ENCODE measurements at regions of chr14 and their contacts with region 1.

Region 1: DNA sequence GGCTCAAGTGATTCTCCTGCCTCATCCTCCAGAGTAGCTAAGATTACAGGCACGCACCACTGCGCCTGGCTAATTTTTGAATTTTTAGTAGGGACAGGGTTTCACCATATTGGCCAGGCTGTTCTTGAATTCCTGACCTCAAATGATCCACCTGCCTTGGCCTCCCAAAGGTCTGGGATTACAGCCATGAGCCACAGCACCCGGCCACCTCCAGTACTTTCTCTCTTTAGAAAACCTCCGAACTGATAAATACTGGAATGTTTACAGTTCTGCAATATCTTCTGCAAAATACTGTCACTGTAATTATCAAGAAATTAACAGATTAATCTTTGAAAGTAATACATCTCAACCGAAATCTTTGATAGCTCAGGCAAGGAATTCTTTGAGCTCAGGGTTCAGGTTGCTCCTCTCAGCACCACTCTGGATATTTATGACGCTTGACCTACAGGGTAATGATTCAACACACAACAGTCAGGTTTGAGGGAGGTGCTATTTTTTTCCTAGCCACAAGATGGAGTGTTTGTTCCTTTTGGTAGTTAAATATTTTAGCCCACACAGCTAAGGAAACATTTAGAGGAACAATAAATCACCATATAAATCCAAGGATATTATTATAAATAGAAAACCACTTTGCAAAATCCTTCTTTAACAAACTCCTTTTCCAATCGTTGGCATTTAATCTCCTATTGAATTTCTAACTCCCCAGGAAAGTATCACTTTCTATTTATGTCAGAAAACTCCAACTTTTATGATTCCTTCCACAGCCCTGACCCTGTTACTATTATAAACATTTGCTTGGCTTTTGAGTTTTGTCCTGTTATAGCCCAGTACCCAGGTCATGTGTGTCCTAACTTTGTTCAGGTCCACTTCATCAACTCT is 48.6 kb upstream of the GTF2A1 start:
- DNase-seq: peak in 1 of 3 donors; percentile 75
- ATAC-seq: peak; percentile 94
- H3K4me3 ChIP-seq: no peak overlapping the region
- H3K4me1 ChIP-seq: no peaks in the 10 kb centered on the region
- CTCF ChIP-seq: peak; percentile 64

Region 2: DNA sequence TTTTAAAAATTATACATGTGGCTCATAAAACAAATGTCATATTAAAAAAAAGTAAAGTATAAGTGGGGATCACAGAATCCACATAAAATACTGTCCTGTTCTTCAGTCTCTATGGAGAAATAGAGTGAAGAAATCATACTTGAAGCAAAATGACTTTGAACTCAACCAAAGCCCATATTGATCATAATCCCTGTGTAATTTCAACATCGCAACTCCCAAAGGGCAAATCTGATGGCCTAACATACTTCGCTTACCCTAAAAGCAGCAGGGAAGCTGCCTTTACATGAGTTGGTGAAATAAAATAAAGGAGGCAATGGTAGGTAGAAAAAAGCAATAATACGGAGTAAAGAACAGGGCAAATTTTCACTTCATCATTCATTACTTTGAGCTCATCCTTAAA is 429.6 kb before region 1 on chr14:
- intact Hi-C with region 1: no loop called
- DNase-seq: no peak
- ATAC-seq: no peak
- H3K4me3 ChIP-seq: no peak overlapping the region
- H3K4me1 ChIP-seq: no peaks in the 10 kb centered on the region
- CTCF ChIP-seq: no peak

Region 3: DNA sequence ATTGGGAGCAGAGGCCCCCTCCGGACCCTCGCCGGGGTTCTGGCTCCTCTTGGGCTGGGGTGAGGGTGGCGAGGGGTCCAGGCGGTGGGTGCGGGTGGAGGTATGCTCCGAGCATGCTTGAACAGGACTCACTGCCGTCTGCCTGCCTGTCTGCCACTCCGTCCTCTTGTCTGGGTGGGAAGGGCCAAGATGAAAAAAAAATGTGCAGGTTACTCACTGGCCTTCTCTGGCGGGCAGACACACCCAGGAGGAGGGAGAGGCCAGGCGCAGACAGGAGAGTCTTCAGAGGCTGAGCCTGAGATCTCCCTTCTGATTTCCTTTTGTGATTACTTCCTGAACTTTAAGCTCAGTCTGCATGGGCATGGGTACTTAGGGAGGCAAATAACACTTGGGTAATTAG is 54.7 kb after region 1 on chr14:
- intact Hi-C with region 1: no loop called
- DNase-seq: peak; percentile 78 to 80 (median 79)
- ATAC-seq: peak; percentile 99
- H3K4me3 ChIP-seq: no peak overlapping the region
- H3K4me1 ChIP-seq: no peaks in the 10 kb centered on the region
- CTCF ChIP-seq: no peak

Region 4: GRCh38 chr14:81453166-81453766 is 183.9 kb after region 1 on chr14:
- intact Hi-C with region 1: loop called (anchors 2 to 5 kb)
- DNase-seq: peak in 2 of 3 donors; percentile 60 to 73
- ATAC-seq: peak; percentile 82
- H3K4me3 ChIP-seq: no peak overlapping the region
- H3K4me1 ChIP-seq: peaks cover 7% of the 10 kb centered on the region
- CTCF ChIP-seq: peak; percentile 81

Measured in mucosa of descending colon (tissue), 3 donors.